ENCODE measurements at regions of chr17 and their contacts with region 1.

Region 1: DNA sequence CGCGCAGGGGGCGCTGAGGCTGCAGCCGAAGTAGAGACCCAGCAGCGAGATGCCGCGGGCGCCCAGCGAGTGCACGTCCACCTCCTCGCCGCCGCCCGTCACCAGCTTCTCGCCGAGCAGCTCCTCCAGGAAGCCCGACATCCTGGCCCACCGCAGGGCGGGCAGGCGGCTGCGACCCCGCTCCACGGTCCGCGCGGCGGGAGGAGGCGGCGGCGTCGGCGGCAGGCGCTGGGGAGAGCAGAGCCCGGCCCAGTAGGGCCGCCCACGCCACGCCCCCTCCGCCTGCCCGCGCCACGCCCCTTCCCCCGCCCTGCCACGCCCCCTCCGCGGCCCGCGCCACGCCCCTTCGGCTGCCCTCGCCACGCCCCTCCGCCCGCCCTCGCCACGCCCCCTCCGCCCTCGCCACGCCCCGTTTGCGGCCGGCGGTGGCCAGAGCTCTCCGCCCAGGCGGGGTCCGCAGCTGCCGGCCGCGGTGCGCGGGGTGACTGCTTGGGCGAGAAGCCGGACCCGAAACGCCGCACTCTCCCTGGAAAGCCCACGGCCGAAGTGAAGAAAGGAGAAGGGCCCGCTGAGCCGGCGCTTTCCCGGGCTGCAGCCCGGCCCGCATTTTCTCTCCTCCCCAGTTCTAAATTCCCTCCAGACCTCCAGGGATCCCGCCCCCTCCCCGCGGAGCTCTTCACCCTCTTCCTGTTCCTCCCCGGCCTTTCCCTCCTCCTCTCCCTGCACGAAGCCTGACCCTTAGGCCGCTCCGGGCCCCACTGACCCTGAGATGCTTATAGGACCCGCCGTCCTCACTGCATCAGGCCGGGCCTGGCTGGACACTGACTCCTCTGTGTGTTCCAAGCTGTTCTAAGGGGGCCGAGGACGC is at the start of gene NXN:
- DNase-seq: peak; percentile 65
- ATAC-seq: peak; percentile 86
- H3K4me3 ChIP-seq: peak within 1 kb of the TSS; percentile 100
- H3K27ac ChIP-seq: peak within 1 kb of the TSS; percentile 91
- H3K4me1 ChIP-seq: peaks cover 12% of the 10 kb centered on the region
- H3K27me3 ChIP-seq: no peaks in the 10 kb centered on the region
- CTCF ChIP-seq: peak; percentile 37
- POLR2A ChIP-seq: no peak
- RAD21 ChIP-seq: peak; percentile 46
- total RNA-seq, gene NXN: 52.5 and 52.8 TPM in 2 replicates

Region 2: GRCh38 chr17:700504-701094 is 279.2 kb before region 1 on chr17:
- CTCF ChIA-PET with region 1: interaction called, 7 read pairs
- POLR2A ChIA-PET with region 1: no interaction called
- dilution Hi-C with region 1: no loop called
- in situ Hi-C with region 1: no loop called
- intact Hi-C with region 1: loop called (anchors 2 kb)
- DNase-seq: peak; percentile 53
- ATAC-seq: peak; percentile 57
- H3K4me3 ChIP-seq: no peak overlapping the region
- H3K27ac ChIP-seq: no peak overlapping the region
- H3K4me1 ChIP-seq: peaks cover 9% of the 10 kb centered on the region
- H3K27me3 ChIP-seq: no peaks in the 10 kb centered on the region
- CTCF ChIP-seq: peak; percentile 77
- POLR2A ChIP-seq: no peak
- RAD21 ChIP-seq: peak; percentile 82

Region 3: GRCh38 chr17:781805-782731 is 197.7 kb before region 1 on chr17 and contains the starts of genes GLOD4 and MRM3:
- CTCF ChIA-PET with region 1: interaction called, 8 read pairs
- POLR2A ChIA-PET with region 1: interaction called, 3 read pairs
- dilution Hi-C with region 1: loop called (anchors 25 kb)
- in situ Hi-C with region 1: loop called (anchors 5 kb)
- intact Hi-C with region 1: loop called (anchors 2 kb)
- DNase-seq: peak; percentile 85
- ATAC-seq: peak; percentile 94
- H3K4me3 ChIP-seq: peak within 1 kb of the TSS; percentile 88
- H3K27ac ChIP-seq: peak within 1 kb of the TSS; percentile 81
- H3K4me1 ChIP-seq: peaks cover 10% of the 10 kb centered on the region; the same call in 1 of the 2 replicates
- H3K27me3 ChIP-seq: no peaks in the 10 kb centered on the region
- CTCF ChIP-seq: no peak; the same call in 1 of the 2 replicates
- POLR2A ChIP-seq: peak; percentile 58
- RAD21 ChIP-seq: peak; percentile 1; the same call in 1 of the 2 replicates
- total RNA-seq, gene GLOD4: 26.3 and 41.1 TPM in 2 replicates
- total RNA-seq, gene MRM3: 15.2 and 16.1 TPM in 2 replicates

Region 4: DNA sequence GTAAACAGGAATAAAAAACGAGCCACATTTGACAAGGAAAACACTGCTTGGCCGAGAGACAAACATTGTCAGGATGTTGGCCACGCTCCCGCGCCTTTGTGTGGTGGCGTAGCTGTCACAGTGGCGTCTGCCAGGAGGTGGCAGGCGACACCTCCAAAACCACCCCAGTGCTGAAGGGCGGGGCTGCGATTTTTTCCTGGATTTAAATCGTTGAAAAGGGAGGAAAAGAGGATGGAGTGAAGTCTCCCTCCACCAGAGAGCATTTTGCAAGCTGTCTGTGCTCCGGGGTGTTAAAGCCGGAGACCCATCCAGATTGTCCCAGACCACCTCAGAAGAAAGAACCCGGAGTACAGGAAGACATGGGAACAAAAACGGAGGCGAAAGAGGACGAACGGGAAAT is 184.9 kb before region 1 on chr17:
- CTCF ChIA-PET with region 1: interaction called, 14 read pairs
- POLR2A ChIA-PET with region 1: no interaction called
- dilution Hi-C with region 1: loop called (anchors 25 kb)
- in situ Hi-C with region 1: no loop called
- intact Hi-C with region 1: loop called (anchors 1 kb)
- DNase-seq: peak; percentile 59
- ATAC-seq: peak; percentile 18
- H3K4me3 ChIP-seq: no peak overlapping the region
- H3K27ac ChIP-seq: peak overlapping the region; percentile 19
- H3K4me1 ChIP-seq: peaks cover 12% of the 10 kb centered on the region; the same call in 1 of the 2 replicates
- H3K27me3 ChIP-seq: no peaks in the 10 kb centered on the region
- CTCF ChIP-seq: peak; percentile 63
- POLR2A ChIP-seq: no peak
- RAD21 ChIP-seq: peak; percentile 77

Measured in IMR-90 (cell line).